Posterior vena cava (tissue), 2 donors: ENCODE measurements at regions of chr13 and their contacts with region 1.

Region 1: GRCh38 chr13:88648598-88649373 is 977.6 kb downstream of the SLITRK5 start:
- DNase-seq: no peak

Region 2: GRCh38 chr13:90329641-90330040 is 1680.9 kb after region 1 on chr13:
- intact Hi-C with region 1: loop called in 1 of 2 experiments (anchors 5 kb)
- DNase-seq: no peak